ENCODE measurements at regions of chr12 and their contacts with region 1.

Region 1: GRCh38 chr12:39103552-39104165 is 198.3 kb upstream of the CPNE8 start:
- DNase-seq: no peak

Region 2: DNA sequence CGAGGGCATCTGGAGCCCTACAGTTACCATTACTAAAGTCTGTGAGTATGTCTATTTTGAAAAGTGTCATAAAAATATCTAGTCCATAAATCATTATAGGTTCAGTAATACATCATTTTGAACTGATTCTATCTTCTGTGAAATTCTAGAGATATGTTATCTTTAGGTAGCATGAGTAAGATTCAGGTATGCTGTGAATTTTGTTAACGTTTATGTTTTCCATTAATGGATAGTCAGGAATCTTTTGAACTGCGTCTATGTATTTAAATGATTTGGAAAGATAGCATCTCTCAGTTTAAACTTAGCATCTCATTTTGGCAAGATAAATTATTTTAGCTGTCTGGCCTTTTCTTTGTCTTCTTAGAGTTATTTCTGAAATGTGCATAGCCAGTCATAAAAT is 778.8 kb before region 1 on chr12:
- intact Hi-C with region 1: loop called (anchors 5 kb)
- DNase-seq: no peak

Region 3: GRCh38 chr12:38906482-38907170 is 197.0 kb before region 1 on chr12:
- intact Hi-C with region 1: loop called (anchors 5 kb)
- DNase-seq: peak; percentile 91

Region 4: DNA sequence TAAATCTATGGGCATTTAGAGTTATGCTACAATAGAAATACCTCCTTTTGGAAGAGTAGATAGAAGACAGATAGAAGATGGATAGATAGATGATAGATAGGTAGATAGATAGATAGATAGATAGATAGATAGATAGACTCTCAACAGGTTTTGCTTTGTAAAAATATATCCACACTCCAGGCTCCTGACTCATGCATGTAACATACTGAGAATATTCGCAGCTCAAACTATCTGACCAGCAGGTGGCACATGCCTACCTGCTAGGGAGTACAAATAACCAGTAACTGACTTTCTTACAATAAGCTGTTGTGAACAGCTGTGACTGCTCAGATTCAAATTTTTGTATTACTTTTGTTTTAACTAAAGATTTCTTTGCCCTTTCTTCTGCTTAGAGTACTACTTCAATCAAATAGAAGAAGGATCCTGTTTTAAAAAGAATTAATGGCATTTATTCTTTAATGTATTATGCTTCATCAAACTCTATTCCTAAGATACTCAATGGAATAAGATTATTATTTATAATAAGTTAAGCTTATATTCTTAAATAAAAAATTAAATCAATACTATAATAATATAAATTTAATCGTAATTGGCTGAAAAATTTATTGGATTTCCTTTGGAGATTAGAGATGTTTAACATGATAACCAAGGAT is 182.5 kb before region 1 on chr12:
- intact Hi-C with region 1: loop called (anchors 5 kb)
- DNase-seq: no peak

Region 5: GRCh38 chr12:38934078-38934584 is 169.5 kb before region 1 on chr12:
- intact Hi-C with region 1: no loop called
- DNase-seq: no peak

Measured in cardiac septum (tissue), 1 donor.